HepG2 (cell line): ENCODE measurements at regions of chr2 and their contacts with region 1.

Region 1: DNA sequence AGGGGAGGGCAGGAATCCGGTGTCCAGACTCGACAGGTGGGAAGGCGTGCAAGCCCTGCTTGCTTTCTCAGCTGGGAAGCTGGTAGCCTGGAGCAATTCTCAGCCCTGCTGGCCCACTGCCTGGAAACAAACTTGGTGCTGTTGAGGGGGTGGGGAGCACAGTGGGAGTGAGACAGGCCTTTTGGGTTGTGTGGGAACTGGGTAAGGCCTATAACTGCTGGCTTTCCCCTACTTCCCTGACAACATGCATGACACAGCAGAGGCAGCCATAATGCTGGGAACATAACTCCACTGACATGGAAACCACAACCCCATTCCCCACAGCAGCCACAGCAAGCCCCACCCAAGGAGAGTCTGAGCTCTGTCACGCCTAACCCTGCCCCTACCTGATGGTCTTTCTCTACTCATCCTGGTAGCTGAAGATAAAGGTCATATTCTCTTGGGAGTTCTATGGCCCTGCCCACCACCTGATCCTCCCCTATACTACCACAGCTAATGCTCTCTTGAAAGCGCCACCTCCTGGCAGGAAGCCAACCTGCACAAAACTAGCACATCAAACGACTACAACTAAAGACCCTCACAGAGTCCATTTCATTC is 122.9 kb upstream of the ACVR1C start:
- DNase-seq: peak; percentile 22
- ATAC-seq: peak; percentile 75
- H3K4me3 ChIP-seq: no peak overlapping the region
- H3K27ac ChIP-seq: no peak overlapping the region
- H3K4me1 ChIP-seq: no peaks in the 10 kb centered on the region
- H3K27me3 ChIP-seq: no peaks in the 10 kb centered on the region
- CTCF ChIP-seq: peak; percentile 49
- EP300 ChIP-seq: no peak
- POLR2A ChIP-seq: no peak
- RAD21 ChIP-seq: no peak

Region 2: DNA sequence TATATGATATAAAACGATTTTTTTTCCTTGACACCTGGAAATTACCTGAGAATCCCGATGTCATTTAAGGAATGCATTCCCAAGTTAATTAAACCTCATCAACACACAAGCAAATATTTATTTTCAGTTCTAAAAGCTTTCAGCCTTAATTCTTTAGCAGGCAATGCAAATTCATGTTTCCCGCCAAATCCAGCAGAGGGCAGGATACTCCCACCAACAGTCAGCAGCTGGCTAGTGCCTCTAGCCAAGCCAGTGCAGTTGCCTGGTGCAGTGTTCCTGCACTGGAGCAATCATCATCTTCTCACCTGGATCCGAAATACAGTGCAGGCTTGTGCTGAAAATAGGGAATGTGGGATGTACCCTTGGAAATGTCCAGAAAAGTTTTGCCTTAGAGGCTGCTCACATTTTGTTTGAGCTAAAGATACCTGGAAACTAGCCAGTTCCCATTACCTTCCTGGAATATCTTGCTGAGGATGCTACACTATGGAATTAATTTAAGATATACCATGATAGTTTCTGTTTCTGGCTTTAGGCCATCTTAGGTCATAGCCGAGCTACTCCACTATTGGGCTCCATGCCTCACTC is 259.3 kb before region 1 on chr2:
- CTCF ChIA-PET with region 1: no interaction called
- POLR2A ChIA-PET with region 1: no interaction called
- in situ Hi-C with region 1: loop called (anchors 25 kb)
- intact Hi-C with region 1: no loop called
- DNase-seq: peak; percentile 56
- ATAC-seq: peak; percentile 99
- H3K4me3 ChIP-seq: no peak overlapping the region
- H3K27ac ChIP-seq: no peak overlapping the region
- H3K4me1 ChIP-seq: no peaks in the 10 kb centered on the region
- H3K27me3 ChIP-seq: no peaks in the 10 kb centered on the region
- CTCF ChIP-seq: peak; percentile 88
- EP300 ChIP-seq: no peak
- POLR2A ChIP-seq: no peak
- RAD21 ChIP-seq: peak; percentile 73

Region 3: DNA sequence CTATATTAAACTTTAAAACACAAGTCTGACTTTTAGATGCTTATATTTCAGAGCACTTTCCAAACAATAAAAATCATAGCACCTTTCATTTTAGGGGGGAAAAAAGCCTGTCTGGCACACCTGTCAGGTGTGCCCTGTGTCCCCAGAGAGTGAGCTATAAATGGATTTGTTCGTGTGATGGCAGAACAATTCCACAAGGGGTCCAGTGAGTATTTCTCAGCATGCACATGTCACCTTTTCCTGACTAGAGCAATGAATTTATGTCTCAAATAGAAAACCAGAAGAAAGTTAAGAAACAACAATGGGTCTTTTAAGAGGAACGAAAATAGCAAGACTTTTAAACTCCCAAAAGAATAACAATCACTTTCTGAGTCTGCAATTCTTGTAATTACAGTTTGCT is 178.8 kb before region 1 on chr2:
- CTCF ChIA-PET with region 1: no interaction called
- POLR2A ChIA-PET with region 1: no interaction called
- in situ Hi-C with region 1: no loop called
- intact Hi-C with region 1: loop called (anchors 5 kb)
- DNase-seq: peak; percentile 29
- ATAC-seq: peak; percentile 93
- H3K4me3 ChIP-seq: no peak overlapping the region
- H3K27ac ChIP-seq: no peak overlapping the region
- H3K4me1 ChIP-seq: no peaks in the 10 kb centered on the region
- H3K27me3 ChIP-seq: no peaks in the 10 kb centered on the region
- CTCF ChIP-seq: peak; percentile 36
- EP300 ChIP-seq: no peak
- POLR2A ChIP-seq: no peak
- RAD21 ChIP-seq: no peak

Region 4: GRCh38 chr2:157735532-157735931 is 16.0 kb before region 1 on chr2:
- CTCF ChIA-PET with region 1: no interaction called
- POLR2A ChIA-PET with region 1: no interaction called
- in situ Hi-C with region 1: no loop called
- intact Hi-C with region 1: no loop called
- DNase-seq: no peak
- ATAC-seq: no peak
- H3K4me3 ChIP-seq: no peak overlapping the region
- H3K27ac ChIP-seq: no peak overlapping the region
- H3K4me1 ChIP-seq: no peaks in the 10 kb centered on the region
- H3K27me3 ChIP-seq: no peaks in the 10 kb centered on the region
- CTCF ChIP-seq: no peak
- EP300 ChIP-seq: no peak
- POLR2A ChIP-seq: no peak
- RAD21 ChIP-seq: no peak